ENCODE measurements at regions of chr3 and their contacts with region 1.

Region 1: DNA sequence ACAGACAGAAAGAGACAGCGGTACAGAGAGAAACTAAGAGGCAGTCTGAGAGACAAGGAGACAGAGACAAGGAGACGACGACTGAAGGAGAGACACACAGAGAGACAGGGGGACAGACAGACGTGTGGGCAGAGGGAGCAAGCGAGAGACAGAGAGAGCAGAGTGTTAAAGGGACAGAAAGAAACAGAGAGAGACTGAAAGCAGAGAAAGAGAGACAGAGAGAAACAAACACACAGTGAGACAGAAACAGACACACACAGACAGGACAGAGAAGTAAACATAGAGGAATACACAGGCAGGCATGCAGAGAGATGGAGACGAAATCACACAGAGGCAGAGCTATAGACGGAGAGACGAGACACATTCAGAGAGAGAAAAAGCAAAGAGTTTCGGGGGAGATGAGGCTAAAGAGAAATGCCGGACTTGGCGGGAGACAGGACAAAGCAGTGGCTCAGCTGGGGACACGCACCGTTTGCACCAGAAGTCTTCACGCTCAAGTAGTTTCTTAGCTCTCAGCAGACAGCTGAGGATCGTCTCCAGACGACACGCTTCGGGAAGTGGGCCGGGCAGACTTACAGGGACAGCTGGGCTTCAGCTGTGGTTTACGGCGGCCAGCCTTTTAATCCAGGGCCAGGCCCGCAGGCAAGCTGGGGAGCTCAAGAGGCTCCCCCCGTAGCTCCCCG is 56.0 kb upstream of the DLG1 start:
- DNase-seq: no peak
- H3K4me3 ChIP-seq: peak overlapping the region; percentile 25; the same call in 1 of the 2 replicates
- CTCF ChIP-seq: no peak

Region 2: DNA sequence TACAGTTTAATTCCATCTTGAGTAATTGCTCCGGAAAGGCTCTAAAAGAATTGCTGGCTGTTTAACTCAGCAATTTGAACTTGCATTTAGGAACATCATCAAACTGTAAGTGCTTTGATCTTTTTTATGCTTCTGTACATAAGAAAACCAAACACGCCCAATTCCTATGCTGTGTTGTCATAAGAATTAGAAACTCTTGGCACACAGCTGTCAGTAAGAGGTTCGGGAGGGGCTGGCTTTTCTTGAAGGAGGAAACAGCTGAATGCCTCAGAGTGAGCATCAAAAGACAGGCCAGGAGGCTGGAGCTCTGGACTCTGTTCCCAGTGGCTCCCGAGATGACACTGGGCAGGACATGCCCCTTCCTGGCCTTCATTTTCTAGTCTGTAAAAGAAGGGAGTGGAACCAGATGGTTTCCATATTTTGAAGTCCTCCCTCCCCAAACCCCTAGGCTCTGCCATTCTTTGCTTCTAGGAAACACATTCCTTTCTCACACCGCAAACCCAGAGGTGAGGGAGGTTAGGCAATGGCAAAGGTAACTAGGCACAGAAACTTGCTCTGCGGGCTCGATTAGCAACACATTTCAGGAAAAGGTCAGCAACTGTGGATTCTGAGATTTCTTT is 17.7 kb after region 1 on chr3:
- CTCF ChIA-PET with region 1: interaction called, 16 read pairs
- POLR2A ChIA-PET with region 1: interaction called, 10 read pairs
- DNase-seq: peak; percentile 79
- H3K4me3 ChIP-seq: no peak overlapping the region
- CTCF ChIP-seq: no peak

Region 3: DNA sequence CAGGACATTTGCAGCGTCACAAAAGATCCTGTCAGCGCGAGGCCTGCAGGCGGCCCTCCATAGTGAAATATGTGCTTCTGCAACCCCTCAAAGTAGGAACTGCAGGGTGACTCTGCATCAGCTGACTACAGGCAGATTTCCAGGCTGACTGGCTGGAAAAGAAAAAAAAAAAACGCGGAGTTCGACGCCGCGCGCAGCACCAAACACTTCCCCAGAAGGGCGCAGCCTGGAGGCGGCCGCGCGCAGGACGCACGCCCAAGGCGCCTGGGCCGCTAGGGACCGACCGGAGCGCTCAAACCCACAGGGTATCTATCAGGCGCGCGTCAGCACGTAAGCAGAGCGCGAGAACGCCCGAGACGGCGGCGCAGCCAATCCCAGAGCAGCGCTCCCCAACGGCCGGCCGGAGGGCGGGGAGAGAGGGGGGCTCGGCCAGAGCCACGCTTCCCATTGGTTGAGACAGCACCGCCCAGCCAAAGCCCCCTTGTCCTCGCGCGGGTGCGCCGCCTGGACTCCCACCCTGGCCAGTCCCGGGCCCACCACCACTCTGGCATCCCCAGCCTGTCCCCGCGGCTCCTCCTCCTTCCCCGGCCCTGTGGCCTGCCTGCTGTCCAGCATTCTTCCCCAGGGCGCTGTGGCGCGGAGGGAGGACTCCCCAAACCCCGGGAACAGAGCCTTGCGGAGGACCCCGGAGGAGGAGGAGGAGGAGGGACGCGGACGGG is 200.3 kb after region 1 on chr3:
- CTCF ChIA-PET with region 1: no interaction called
- POLR2A ChIA-PET with region 1: no interaction called
- DNase-seq: peak; percentile 71
- H3K4me3 ChIP-seq: peak overlapping the region; percentile 95
- CTCF ChIP-seq: peak; percentile 84

Measured in AG04449 (cell line).